ENCODE measurements at regions of chr1 and their contacts with region 1.

Region 1: DNA sequence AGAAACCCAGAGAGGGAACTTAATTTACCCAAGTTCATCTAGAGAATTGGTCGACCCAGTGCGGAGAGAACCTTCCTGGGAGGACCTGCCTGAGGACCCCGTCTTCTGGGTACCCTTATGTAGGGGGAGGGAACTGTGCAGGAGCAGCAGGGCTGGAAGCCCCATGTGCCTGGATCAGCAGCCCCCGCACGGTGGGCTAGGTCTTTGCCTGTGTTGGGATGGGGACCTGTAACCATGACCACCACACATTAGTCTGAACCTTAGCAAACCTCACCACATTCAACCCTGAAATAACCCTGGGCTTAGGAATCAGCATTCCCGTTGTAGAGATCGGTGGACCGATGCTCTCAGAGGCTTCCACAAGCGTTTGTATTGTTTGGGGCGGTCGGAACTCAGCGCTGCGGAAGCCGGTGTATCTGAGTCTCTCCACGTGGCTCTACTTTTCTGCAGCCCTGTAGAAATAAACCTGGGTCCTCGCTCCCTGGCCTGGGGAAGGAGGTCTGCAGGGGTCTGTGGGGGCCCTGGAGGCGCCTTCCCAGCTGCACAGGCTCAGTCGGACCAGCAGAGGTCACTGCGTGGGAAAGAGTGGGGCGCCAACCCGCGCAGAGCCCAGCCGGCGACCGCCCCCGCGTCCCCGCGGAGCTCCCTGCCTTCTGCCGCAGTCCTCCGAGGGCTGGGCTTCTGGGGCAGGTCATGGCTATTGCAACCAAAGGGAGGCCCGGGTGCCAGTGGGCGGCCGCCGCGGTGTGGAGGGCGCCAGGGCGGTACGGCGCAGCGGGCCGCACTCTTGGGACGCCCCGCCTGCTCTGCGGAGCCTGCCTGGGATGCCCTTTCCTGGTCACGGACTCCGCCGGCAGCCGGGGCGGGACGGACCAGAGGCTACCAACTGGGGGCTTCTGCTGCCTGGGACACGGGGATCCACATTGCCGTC is 36.2 kb upstream of the KCNA10 start:
- DNase-seq: peak; percentile 67
- ATAC-seq: peak; percentile 90

Region 2: GRCh38 chr1:110605901-110606656 is 50.9 kb after region 1 on chr1 and contains the start of gene KCNA2:
- intact Hi-C with region 1: loop called in 1 of 2 experiments (anchors 10 kb)
- DNase-seq: peak; percentile 43
- ATAC-seq: peak; percentile 81 to 86
- total RNA-seq, gene KCNA2: 0.60 to 1.8 TPM

Region 3: DNA sequence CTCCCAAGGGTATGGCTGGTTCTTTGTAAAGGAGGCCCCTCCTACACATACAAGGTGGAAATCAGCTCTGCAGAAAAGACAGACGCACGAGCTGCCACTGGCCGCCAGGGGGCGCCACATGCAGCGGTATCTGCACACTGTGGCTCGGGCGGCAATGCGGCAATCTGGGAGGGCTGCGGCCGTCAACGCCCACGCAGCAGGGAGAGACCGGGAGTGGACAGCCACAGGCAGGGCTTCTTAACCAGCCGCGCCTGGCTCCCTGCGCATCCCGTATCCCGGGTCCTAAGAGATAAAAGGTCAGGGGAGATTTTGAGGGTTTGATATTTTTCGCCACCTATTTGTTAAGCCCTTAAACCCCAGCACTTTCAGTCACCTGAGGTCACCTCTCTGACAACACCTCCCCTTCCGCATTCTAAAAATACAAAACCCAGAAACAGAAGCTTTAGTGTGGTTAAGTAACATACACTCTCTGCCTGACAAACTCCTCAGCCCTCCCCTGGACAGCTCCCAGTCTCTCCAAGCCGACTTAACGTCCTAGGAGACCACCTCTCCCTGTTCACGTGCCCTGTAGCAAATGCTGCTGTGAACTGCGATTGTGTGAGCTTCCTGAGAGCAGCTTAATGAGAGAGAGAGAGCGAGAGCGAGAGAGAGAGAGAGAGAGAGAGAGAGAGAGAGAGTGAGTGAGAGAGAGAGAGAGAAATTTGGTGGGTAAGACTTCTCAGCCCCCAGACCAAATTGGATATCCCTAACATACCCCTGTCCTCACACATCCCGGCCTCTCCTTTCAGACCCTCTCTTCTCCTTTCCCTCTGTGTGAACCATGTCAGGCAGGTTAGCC is 64.5 kb after region 1 on chr1:
- intact Hi-C with region 1: loop called in 1 of 2 experiments (anchors 2 kb)
- DNase-seq: peak; percentile 92
- ATAC-seq: peak; percentile 89 to 95

Measured in left cardiac atrium (tissue), 4 donors.